ENCODE measurements at regions of chr19 and their contacts with region 1.

Region 1: GRCh38 chr19:3471954-3472655 is 8.2 kb downstream of the SMIM24 start:
- DNase-seq: peak in 1 of 4 donors; percentile 81
- ATAC-seq: peak; percentile 76
- H3K4me3 ChIP-seq: no peak overlapping the region
- H3K27ac ChIP-seq: no peak overlapping the region
- H3K4me1 ChIP-seq: peaks cover 0 to 14% of the 10 kb centered on the region in 2 donors
- H3K27me3 ChIP-seq: peaks cover 0 to 8% of the 10 kb centered on the region in 2 donors
- CTCF ChIP-seq: peak; percentile 64 to 88

Region 2: DNA sequence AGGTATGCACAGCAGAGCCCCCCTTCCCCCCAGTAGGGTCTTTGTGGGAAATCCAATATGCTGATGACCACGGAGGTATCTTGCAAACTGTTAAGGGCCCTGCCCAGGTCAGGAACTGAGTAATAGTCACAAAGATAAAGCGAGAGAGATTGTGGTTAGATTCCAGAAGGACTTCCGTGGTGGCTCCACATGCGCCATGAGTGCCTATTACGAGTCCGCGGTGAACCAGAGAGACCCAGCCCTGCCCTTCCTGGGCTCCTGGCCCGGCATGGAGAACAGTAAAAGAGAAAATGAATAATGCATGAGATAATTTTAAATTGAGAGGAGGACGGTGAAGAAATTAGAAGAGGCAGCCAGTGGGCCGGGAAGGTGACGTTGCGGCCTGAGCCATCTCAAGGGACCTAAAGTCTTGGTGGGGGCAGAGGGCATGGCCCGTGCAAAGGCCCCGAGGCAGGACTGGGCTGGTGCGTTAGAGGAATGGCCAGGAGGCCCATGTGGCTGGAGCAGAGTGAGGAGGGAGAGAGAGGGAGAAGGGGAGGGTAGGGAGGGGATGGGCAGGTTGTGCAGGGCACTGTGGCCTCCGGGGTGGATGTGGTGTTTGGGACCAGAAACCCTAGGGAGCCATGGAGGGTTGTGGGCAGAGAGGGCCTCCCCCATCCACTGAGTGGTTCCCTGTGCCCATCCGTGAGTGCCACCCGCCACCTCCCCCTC is 152.3 kb before region 1 on chr19:
- intact Hi-C with region 1: loop called in 1 of 2 experiments (anchors 10 kb)
- DNase-seq: peak in 1 of 4 donors; percentile 35
- ATAC-seq: no peak
- H3K4me3 ChIP-seq: no peak overlapping the region
- H3K27ac ChIP-seq: no peak overlapping the region
- H3K4me1 ChIP-seq: no peaks in the 10 kb centered on the region
- H3K27me3 ChIP-seq: peaks cover 0 to 58% of the 10 kb centered on the region in 2 donors
- CTCF ChIP-seq: no peak

Region 3: DNA sequence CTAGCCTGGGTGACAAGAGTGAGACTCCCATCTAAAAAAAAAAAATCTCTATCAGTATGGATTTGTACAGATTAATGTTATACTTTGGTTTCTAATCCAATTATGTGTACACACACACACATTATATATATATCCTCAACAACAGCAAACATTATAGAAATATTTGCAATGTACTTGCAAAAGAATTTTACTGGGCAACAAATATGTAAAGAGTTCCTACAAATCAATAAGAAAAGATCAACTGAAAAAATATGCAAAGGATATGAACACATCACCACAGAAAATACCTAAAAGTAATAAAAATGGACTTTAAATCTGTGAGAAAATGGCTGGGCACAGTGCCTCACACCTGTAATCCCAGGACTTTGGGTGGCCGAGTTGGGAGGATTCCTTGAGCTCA is 146.7 kb before region 1 on chr19:
- intact Hi-C with region 1: loop called in 1 of 2 experiments (anchors 5 kb)
- DNase-seq: no peak
- ATAC-seq: no peak
- H3K4me3 ChIP-seq: no peak overlapping the region
- H3K27ac ChIP-seq: no peak overlapping the region
- H3K4me1 ChIP-seq: peaks cover 0 to 6% of the 10 kb centered on the region in 2 donors
- H3K27me3 ChIP-seq: peaks cover 0 to 12% of the 10 kb centered on the region in 2 donors
- CTCF ChIP-seq: no peak

Region 4: DNA sequence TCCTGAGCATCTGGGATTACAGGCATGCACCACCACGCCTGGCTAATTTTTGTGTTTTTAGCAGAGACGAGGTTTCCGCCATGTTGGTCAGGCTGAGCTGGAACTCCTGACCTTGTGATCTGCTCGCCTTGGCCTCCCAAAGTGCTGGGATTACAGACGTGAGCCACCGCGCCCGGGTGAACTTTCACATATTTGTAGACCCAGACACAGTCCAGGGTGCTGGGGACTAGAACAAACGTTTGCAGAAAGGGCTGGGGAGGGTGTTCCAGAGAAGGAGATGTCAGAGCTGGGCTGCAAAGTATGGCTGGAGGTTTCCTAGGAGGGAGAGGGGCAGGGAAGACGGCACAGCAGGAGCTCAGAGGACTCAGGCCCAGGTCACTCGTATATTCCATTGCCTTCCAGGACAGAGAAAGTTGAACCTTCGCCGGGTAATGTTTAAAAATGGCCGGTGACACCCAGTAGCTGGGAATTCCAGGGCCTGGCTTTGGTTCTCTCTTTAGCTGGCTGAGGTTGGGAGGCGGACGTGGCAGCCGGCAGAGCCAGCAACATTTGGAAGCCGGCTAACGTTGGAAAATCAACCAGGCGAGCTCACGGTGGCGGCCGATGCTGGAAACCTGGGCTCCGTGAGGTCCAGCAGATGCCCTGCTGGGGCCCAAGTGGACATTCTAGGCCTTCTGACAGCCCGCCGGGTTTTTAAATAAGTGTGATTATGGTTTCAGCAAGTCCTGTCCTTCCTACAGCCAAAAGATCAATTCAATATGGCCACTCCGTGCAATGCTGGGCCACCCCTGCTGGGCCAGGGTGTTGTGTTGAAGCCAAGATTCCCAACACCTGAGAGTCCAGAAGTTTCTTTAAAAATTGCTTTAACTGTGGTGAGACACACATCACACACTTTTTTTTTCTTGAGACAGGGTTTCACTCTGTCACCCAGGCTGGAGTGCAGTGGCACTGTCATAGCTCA is 64.3 kb before region 1 on chr19:
- intact Hi-C with region 1: no loop called
- DNase-seq: peak in 2 of 4 donors; percentile 58 to 76
- ATAC-seq: no peak
- H3K4me3 ChIP-seq: no peak overlapping the region
- H3K27ac ChIP-seq: peak overlapping the region; percentile 63 to 71
- H3K4me1 ChIP-seq: peaks cover 13 to 61% of the 10 kb centered on the region in 2 donors
- H3K27me3 ChIP-seq: no peaks in the 10 kb centered on the region
- CTCF ChIP-seq: no peak

Measured in left lung (tissue), 14 donors.